ENCODE measurements at regions of chr12 and their contacts with region 1.

Region 1: DNA sequence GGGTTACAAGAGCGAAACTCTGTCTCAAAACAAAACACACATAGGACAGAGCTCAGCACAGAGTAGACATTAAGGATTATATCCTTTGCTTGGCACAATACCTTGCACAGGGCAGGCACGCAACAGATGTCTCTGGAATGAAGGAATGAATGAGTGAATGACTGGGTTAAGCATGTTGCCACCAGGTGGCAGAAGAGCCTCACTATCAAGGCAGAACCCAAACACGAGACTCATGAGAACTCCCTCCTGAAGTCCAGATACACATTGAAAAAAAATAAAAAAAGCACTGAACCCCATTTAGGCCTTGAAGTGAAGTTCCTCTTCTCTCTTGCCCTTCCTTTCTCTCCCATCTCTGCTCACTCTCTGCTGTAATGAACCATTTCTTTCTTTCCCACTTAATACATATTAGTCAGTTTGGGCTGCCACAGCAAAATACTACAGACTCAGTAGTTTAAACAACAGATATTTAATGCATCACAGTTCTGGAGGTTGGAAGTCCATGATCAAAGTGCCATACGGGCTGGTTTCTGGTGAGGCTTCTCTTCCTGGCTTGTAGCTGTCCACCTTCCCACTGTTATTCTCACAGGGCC is 26.6 kb upstream of the LTA4H start:
- DNase-seq: peak; percentile 92
- H3K4me3 Mint-ChIP-seq: no peak overlapping the region
- H3K27ac Mint-ChIP-seq: no peak overlapping the region
- H3K4me1 Mint-ChIP-seq: peaks cover 24% of the 10 kb centered on the region
- H3K27me3 Mint-ChIP-seq: no peaks in the 10 kb centered on the region

Region 2: GRCh38 chr12:96108321-96108720 is 46.4 kb after region 1 on chr12:
- intact Hi-C with region 1: loop called (anchors 5 kb)
- DNase-seq: peak; percentile 78
- H3K4me3 Mint-ChIP-seq: peak overlapping the region; percentile 66
- H3K27ac Mint-ChIP-seq: peak overlapping the region; percentile 83
- H3K4me1 Mint-ChIP-seq: peaks cover 13% of the 10 kb centered on the region
- H3K27me3 Mint-ChIP-seq: peaks cover 8% of the 10 kb centered on the region

Region 3: DNA sequence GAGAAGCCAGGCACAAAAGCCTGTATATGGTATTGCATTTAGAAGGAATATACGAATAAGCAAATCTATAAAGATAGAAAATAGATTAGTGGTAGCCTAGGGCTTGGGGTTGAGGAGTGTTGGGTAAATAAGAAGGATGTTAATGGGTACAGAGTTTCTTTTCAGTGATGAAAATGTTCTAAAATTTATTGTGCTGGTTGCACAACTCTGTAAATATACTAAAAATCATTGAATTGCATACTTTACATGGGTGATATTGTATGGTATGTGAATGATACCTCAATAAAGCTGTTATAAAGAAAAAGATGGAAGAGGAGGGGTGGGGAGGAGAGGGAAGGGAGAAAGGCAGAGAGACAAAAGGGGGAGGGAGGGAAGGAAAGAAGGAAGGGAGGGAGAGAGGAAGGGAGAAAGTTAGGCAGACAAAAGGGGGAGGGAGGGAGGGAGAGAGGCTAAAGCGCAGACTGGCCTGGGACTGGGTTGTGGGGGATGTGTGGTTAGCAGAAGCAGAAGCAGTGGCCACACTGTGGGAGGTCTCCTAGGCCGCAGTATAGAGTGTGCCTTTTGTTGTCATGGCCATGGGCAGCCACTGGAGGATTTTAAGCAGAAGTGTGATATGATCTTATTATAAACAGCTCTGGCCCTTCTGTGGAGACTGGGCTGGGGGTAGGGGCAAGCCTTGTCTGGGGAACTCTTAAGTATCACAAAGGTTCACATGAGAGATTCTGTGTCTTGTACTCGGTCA is 58.6 kb after region 1 on chr12:
- intact Hi-C with region 1: loop called (anchors 5 kb)
- DNase-seq: no peak
- H3K4me3 Mint-ChIP-seq: no peak overlapping the region
- H3K27ac Mint-ChIP-seq: no peak overlapping the region
- H3K4me1 Mint-ChIP-seq: peaks cover 13% of the 10 kb centered on the region
- H3K27me3 Mint-ChIP-seq: no peaks in the 10 kb centered on the region

Region 4: GRCh38 chr12:96219698-96220206 is 157.8 kb after region 1 on chr12:
- intact Hi-C with region 1: loop called (anchors 1 kb)
- DNase-seq: no peak
- H3K4me3 Mint-ChIP-seq: no peak overlapping the region
- H3K27ac Mint-ChIP-seq: no peak overlapping the region
- H3K4me1 Mint-ChIP-seq: peaks cover 27% of the 10 kb centered on the region
- H3K27me3 Mint-ChIP-seq: no peaks in the 10 kb centered on the region

Region 5: GRCh38 chr12:96473394-96474093 is 411.6 kb after region 1 on chr12:
- intact Hi-C with region 1: no loop called
- DNase-seq: no peak
- H3K4me3 Mint-ChIP-seq: no peak overlapping the region
- H3K27ac Mint-ChIP-seq: no peak overlapping the region
- H3K4me1 Mint-ChIP-seq: peaks cover 8% of the 10 kb centered on the region
- H3K27me3 Mint-ChIP-seq: peaks cover 10% of the 10 kb centered on the region

Measured in activated CD4-positive, alpha-beta T cell treated with anti-CD3 and anti-CD28 coated beads, Interleukin-2, amount 10 ng/mL, durations not matched to agents 24 days and 14 days (primary cell).